GM12878 (cell line): ENCODE measurements at regions of chr11 and their contacts with region 1.

Region 1: DNA sequence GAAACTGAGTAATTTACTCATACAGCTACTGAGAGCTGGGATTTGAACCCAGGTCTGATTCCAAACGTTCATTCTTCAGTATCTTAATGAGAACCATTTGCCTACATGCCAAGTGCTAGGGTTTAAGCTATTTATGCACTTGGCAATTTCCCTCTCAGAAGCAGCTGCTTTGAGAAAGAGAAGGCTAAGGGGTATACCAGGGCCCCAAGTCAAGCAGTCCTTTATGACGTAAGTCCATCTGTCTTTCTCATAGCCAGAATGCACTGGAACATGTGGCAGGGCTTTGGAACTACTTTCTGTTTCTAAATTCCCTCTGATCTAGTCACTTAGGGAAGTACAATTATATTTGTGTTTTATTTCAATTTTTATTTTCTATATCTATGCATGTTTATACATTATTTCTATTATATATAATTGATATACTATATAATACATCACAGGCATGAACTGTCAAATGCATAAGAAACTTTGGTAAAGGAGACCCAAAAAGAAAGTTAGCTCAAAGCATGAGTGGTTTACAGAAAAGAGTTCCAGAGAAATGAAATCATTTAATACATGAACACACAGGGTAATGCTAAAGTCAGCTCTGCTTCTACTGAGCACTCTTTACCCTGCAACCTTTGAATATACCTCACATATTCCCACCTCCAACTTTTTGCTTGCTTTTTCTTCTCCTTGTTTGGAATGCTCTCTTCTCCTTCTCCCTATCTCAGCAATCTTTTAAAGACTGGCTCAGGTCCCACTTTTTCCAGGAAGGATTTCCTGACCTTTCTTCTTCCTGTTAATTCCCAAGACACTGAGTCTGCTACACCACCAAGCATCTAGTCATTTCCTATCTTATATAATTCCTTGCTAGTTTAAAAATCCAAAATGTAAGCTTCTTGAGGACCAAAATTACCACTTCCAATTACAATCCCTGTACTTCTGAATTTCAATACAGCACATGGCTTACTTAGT is 80.5 kb upstream of the GDPD4 start:
- DNase-seq: no peak
- ATAC-seq: no peak; the same call in 2 of the 3 replicates
- H3K4me3 ChIP-seq: no peak overlapping the region
- H3K27ac ChIP-seq: no peak overlapping the region
- H3K4me1 ChIP-seq: no peaks in the 10 kb centered on the region
- H3K27me3 ChIP-seq: no peaks in the 10 kb centered on the region
- CTCF ChIP-seq: no peak
- EP300 ChIP-seq: no peak
- POLR2A ChIP-seq: no peak
- RAD21 ChIP-seq: no peak

Region 2: GRCh38 chr11:77400773-77401449 is 18.9 kb after region 1 on chr11:
- CTCF ChIA-PET with region 1: interaction called, 6 read pairs
- POLR2A ChIA-PET with region 1: no interaction called
- RAD21 ChIA-PET with region 1: no interaction called
- SMC1A ChIA-PET with region 1: interaction called, 10 read pairs
- in situ Hi-C with region 1: no loop called
- intact Hi-C with region 1: no loop called
- DNase-seq: no peak
- ATAC-seq: peak; percentile 75
- H3K4me3 ChIP-seq: no peak overlapping the region
- H3K27ac ChIP-seq: peak overlapping the region; percentile 17; the same call in 1 of the 2 replicates
- H3K4me1 ChIP-seq: peaks cover 19% of the 10 kb centered on the region
- H3K27me3 ChIP-seq: no peaks in the 10 kb centered on the region
- CTCF ChIP-seq: peak; percentile 14 to 28 (median 26); a peak in 4 of 6 replicates
- EP300 ChIP-seq: no peak
- POLR2A ChIP-seq: no peak
- RAD21 ChIP-seq: 0 out of 2 replicates have a peak, but pooled peaks have one; percentile 14